ENCODE measurements at regions of chr17 and their contacts with region 1.

Region 1: GRCh38 chr17:31524926-31525800 is 133.7 kb downstream of the RAB11FIP4 start:
- DNase-seq: peak; percentile 75 to 95 (median 83)
- ATAC-seq: peak; percentile 80
- H3K4me3 ChIP-seq: no peak overlapping the region
- H3K4me3 Mint-ChIP-seq: no peak overlapping the region
- H3K27ac ChIP-seq: no peak overlapping the region
- H3K27ac Mint-ChIP-seq: no peak overlapping the region
- H3K4me1 ChIP-seq: no peaks in the 10 kb centered on the region
- H3K4me1 Mint-ChIP-seq: peaks cover 1% of the 10 kb centered on the region
- H3K27me3 ChIP-seq: no peaks in the 10 kb centered on the region
- H3K27me3 Mint-ChIP-seq: no peaks in the 10 kb centered on the region
- CTCF ChIP-seq: peak; percentile 90

Region 2: GRCh38 chr17:31015639-31016038 is 509.5 kb before region 1 on chr17:
- CTCF ChIA-PET with region 1: no interaction called
- POLR2A ChIA-PET with region 1: no interaction called
- intact Hi-C with region 1: loop called in 1 of 2 experiments (anchors 5 kb)
- DNase-seq: no peak
- ATAC-seq: no peak
- H3K4me3 ChIP-seq: no peak overlapping the region
- H3K4me3 Mint-ChIP-seq: no peak overlapping the region
- H3K27ac ChIP-seq: no peak overlapping the region
- H3K27ac Mint-ChIP-seq: no peak overlapping the region
- H3K4me1 ChIP-seq: no peaks in the 10 kb centered on the region
- H3K4me1 Mint-ChIP-seq: no peaks in the 10 kb centered on the region
- H3K27me3 ChIP-seq: no peaks in the 10 kb centered on the region
- H3K27me3 Mint-ChIP-seq: peaks cover 2% of the 10 kb centered on the region
- CTCF ChIP-seq: no peak

Region 3: DNA sequence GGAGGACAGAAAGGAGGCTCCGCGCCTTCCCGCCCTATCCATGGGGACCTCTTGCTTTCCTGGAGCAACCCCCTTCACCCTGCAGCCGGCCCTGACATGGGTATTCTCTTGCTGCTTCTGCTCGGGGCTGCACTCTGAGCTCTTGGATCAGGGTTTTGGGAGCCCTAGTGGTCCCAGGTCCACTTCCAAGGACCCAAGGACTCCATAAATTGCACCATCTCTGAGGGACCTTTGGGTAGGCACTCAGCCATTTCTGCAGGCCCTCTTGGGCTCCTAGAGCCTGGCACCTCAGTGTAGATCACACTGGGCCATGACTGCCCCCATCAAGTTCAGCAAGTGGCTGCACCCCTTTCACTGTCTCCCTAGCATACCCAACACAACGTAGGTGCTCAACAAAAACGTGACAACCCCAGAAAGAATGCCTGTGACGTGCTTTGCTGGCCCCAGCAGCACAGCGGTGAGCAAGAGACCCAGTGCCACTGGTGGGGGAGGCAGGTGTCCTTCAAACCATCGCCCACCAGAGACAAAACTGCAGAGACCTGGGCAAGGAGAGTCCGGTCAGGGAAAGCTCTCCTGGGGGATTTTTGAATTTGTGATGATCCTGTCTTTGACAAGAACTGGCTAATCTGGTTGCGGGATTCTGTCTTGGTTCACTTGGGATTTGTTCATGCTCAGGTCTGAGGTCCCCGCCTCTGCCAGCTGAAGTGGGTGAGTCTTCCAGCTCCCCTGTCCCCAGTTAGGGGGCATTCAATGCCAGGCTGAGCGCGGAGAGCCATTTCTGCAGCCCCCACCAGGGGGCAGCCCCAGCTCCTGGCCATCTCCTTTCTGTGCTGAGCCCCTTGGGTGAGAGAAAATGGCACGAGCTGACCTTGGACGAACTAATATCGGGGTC is 136.1 kb before region 1 on chr17:
- CTCF ChIA-PET with region 1: interaction called, 82 read pairs
- POLR2A ChIA-PET with region 1: no interaction called
- intact Hi-C with region 1: loop called in 1 of 2 experiments (anchors 1 kb)
- DNase-seq: peak in 8 of 9 experiments; percentile 16 to 70 (median 52)
- ATAC-seq: peak; percentile 71
- H3K4me3 ChIP-seq: no peak overlapping the region
- H3K4me3 Mint-ChIP-seq: no peak overlapping the region
- H3K27ac ChIP-seq: no peak overlapping the region
- H3K27ac Mint-ChIP-seq: no peak overlapping the region
- H3K4me1 ChIP-seq: peaks cover 11% of the 10 kb centered on the region
- H3K4me1 Mint-ChIP-seq: peaks cover 9% of the 10 kb centered on the region
- H3K27me3 ChIP-seq: peaks cover 8 to 10% of the 10 kb centered on the region in 2 experiments
- H3K27me3 Mint-ChIP-seq: peaks cover 30% of the 10 kb centered on the region
- CTCF ChIP-seq: peak; percentile 58

Region 4: GRCh38 chr17:31433091-31433790 is 91.9 kb before region 1 on chr17:
- CTCF ChIA-PET with region 1: interaction called, 265 read pairs
- POLR2A ChIA-PET with region 1: interaction called, 10 read pairs
- intact Hi-C with region 1: loop called (anchors 1 kb)
- DNase-seq: peak; percentile 20 to 71 (median 55)
- ATAC-seq: peak; percentile 89
- H3K4me3 ChIP-seq: no peak overlapping the region
- H3K4me3 Mint-ChIP-seq: peak overlapping the region; percentile 62
- H3K27ac ChIP-seq: no peak overlapping the region
- H3K27ac Mint-ChIP-seq: peak overlapping the region; percentile 33
- H3K4me1 ChIP-seq: peaks cover 16% of the 10 kb centered on the region
- H3K4me1 Mint-ChIP-seq: peaks cover 20% of the 10 kb centered on the region
- H3K27me3 ChIP-seq: peaks cover 0 to 2% of the 10 kb centered on the region in 2 experiments
- H3K27me3 Mint-ChIP-seq: peaks cover 13% of the 10 kb centered on the region
- CTCF ChIP-seq: no peak

Region 5: DNA sequence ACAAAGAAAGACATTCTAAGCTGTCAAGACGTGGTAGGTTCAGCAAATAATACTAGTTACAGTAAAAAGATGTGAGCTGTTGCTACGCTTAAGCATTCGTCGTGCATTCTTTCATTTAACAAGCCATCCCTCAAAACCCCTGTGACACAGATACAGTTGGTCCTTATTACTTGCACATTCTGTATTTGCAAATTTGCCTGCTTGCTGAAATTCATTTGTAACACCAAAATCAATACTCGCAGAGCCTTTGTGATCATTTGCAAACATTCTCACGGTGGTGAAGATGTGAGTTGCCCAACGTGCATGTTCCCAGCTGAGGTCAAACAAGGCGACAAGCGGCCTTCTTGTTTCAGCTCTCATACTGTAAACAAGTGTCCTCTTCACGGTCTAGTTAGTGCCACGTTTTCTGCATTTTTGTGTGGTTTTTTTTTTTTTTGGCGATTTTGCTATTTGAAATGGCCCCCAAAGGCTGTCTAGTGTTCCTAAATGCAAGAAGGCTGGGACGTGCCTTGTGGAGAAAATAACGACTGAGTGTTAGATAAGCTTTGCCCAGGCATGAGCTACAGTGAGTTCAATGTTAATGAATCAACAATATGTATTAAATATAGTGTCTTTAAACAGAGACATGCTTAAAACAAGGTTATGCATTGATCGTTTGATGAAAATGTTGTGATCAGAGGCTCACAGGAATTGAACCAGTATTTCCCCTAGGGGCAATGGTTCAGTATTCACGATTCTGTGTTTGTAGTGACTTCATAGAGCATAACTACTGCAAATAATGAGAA is 49.6 kb before region 1 on chr17:
- CTCF ChIA-PET with region 1: interaction called, 10 read pairs
- POLR2A ChIA-PET with region 1: no interaction called
- intact Hi-C with region 1: no loop called
- DNase-seq: no peak
- ATAC-seq: no peak
- H3K4me3 ChIP-seq: no peak overlapping the region
- H3K4me3 Mint-ChIP-seq: no peak overlapping the region
- H3K27ac ChIP-seq: no peak overlapping the region
- H3K27ac Mint-ChIP-seq: no peak overlapping the region
- H3K4me1 ChIP-seq: peaks cover 1% of the 10 kb centered on the region
- H3K4me1 Mint-ChIP-seq: peaks cover 4% of the 10 kb centered on the region
- H3K27me3 ChIP-seq: no peaks in the 10 kb centered on the region
- H3K27me3 Mint-ChIP-seq: no peaks in the 10 kb centered on the region
- CTCF ChIP-seq: no peak

Region 6: GRCh38 chr17:31487648-31488263 is 37.4 kb before region 1 on chr17:
- CTCF ChIA-PET with region 1: interaction called, 5 read pairs
- POLR2A ChIA-PET with region 1: interaction called, 3 read pairs
- intact Hi-C with region 1: loop called (anchors 5 kb)
- DNase-seq: peak; percentile 92 to 98 (median 96)
- ATAC-seq: peak; percentile 91
- H3K4me3 ChIP-seq: peak overlapping the region; percentile 80 to 83
- H3K4me3 Mint-ChIP-seq: peak overlapping the region; percentile 92
- H3K27ac ChIP-seq: peak overlapping the region; percentile 85 to 89
- H3K27ac Mint-ChIP-seq: peak overlapping the region; percentile 96
- H3K4me1 ChIP-seq: peaks cover 49% of the 10 kb centered on the region
- H3K4me1 Mint-ChIP-seq: peaks cover 50% of the 10 kb centered on the region
- H3K27me3 ChIP-seq: no peaks in the 10 kb centered on the region
- H3K27me3 Mint-ChIP-seq: no peaks in the 10 kb centered on the region
- CTCF ChIP-seq: no peak

Region 7: GRCh38 chr17:31541559-31541958 is 16.4 kb after region 1 on chr17:
- CTCF ChIA-PET with region 1: interaction called, 12 read pairs
- POLR2A ChIA-PET with region 1: no interaction called
- intact Hi-C with region 1: no loop called
- DNase-seq: no peak
- ATAC-seq: no peak
- H3K4me3 ChIP-seq: no peak overlapping the region
- H3K4me3 Mint-ChIP-seq: no peak overlapping the region
- H3K27ac ChIP-seq: no peak overlapping the region
- H3K27ac Mint-ChIP-seq: no peak overlapping the region
- H3K4me1 ChIP-seq: no peaks in the 10 kb centered on the region
- H3K4me1 Mint-ChIP-seq: peaks cover 4% of the 10 kb centered on the region
- H3K27me3 ChIP-seq: no peaks in the 10 kb centered on the region
- H3K27me3 Mint-ChIP-seq: no peaks in the 10 kb centered on the region
- CTCF ChIP-seq: no peak

Measured in CD8-positive, alpha-beta T cell (primary cell).